ENCODE measurements at regions of chr10 and their contacts with region 1.

Region 1: GRCh38 chr10:77247031-77247990 is 390.3 kb downstream of the KCNMA1 start:
- DNase-seq: peak in 2 of 4 donors; percentile 44 to 48
- ATAC-seq: peak; percentile 73
- H3K4me3 ChIP-seq: no peak overlapping the region
- H3K27ac ChIP-seq: peak overlapping the region in 1 of 4 donors; percentile 60
- H3K4me1 ChIP-seq: peaks cover 37% of the 10 kb centered on the region
- H3K27me3 ChIP-seq: no peaks in the 10 kb centered on the region
- CTCF ChIP-seq: no peak
- POLR2A ChIP-seq: no peak

Region 2: GRCh38 chr10:77160679-77161078 is 86.6 kb before region 1 on chr10:
- intact Hi-C with region 1: no loop called
- DNase-seq: no peak
- ATAC-seq: no peak
- H3K4me3 ChIP-seq: no peak overlapping the region
- H3K27ac ChIP-seq: no peak overlapping the region
- H3K4me1 ChIP-seq: peaks cover 18% of the 10 kb centered on the region
- H3K27me3 ChIP-seq: no peaks in the 10 kb centered on the region
- CTCF ChIP-seq: no peak
- POLR2A ChIP-seq: no peak

Region 3: GRCh38 chr10:77641788-77642397 is 394.6 kb after region 1 on chr10:
- intact Hi-C with region 1: loop called (anchors 10 kb)
- DNase-seq: peak; percentile 80 to 87 (median 82)
- ATAC-seq: peak; percentile 63
- H3K4me3 ChIP-seq: no peak overlapping the region
- H3K27ac ChIP-seq: no peak overlapping the region
- H3K4me1 ChIP-seq: peaks cover 20% of the 10 kb centered on the region
- H3K27me3 ChIP-seq: peaks cover 0 to 3% of the 10 kb centered on the region in 2 donors
- CTCF ChIP-seq: peak; percentile 57 to 95 (median 92)
- POLR2A ChIP-seq: no peak

Measured in body of pancreas (tissue), 4 donors.